PC-9 (cell line): ENCODE measurements at regions of chr1 and their contacts with region 1.

Region 1: DNA sequence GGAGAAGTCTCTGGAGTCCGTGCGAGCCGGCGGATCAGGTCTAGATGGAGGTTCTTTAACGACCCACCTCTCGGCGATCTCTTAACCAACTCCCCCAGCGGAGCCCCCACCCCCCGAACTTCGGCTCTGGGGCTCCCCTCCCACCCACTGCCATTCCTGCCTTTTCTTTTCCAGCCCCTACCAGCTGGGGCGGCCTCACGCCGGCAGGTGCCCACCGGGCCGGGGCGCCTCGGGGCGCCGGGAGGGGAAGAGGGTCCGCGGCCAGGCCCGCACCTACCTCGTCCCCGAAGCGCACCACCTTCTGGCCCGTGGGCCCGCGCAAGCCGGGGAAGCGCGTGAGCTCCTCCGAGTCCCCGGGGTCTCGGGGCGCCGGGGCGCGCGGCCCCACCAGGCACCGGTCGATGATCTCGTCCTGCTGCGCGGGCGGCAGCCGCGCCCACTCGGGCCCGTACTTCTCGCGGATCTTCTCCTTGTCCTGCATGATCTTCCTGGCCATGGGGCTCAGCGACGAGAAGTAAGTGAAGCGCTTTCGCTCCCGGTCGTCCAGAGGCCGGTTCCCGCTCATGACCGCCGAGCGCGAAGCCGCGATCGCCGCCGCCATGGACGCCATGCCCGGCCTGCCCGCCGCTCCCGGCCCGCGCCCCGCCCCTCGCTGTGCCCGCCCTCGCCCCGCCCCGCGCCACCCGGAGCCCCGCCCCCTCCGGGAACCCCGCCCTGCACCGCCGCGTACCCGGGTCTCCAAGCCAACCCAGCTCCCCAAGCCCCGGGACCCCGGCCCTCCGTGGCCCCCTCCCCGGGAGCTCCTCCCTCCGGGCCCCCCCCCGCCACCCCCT is at the start of gene C1orf198:
- DNase-seq: peak in 1 of 2 experiments; percentile 75
- H3K4me3 ChIP-seq: peak within 1 kb of the TSS; percentile 78
- H3K27ac ChIP-seq: peak within 1 kb of the TSS; percentile 61
- H3K4me1 ChIP-seq: peaks cover 37% of the 10 kb centered on the region
- H3K27me3 ChIP-seq: no peaks in the 10 kb centered on the region
- CTCF ChIP-seq: no peak; the same call in 1 of the 2 replicates
- total RNA-seq, gene C1orf198: 20.5 and 24.5 TPM in 2 replicates

Region 2: DNA sequence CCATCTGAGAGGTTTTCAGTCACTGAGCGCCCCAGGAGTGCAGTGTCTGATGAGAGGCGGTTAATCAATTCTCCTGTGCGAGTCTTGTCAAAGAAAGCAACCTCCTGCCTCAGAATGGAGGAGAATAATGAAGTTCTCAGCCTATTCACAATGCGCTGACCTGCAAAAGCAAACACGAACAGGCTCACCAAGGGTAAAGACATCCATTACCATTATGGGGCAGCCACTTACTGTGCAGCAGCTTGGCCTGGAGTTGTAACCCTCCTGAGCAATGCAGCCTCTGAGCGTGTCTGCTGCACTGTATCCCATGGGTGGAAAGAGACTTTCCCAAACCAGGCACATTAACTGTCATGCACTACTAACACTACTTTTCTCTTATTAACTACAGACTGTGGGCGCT is 1320.6 kb before region 1 on chr1:
- CTCF ChIA-PET with region 1: no interaction called
- POLR2A ChIA-PET with region 1: interaction called, 30 read pairs
- intact Hi-C with region 1: no loop called
- DNase-seq: no peak
- H3K4me3 ChIP-seq: no peak overlapping the region
- H3K27ac ChIP-seq: no peak overlapping the region
- H3K4me1 ChIP-seq: no peaks in the 10 kb centered on the region
- H3K27me3 ChIP-seq: no peaks in the 10 kb centered on the region
- CTCF ChIP-seq: no peak

Region 3: GRCh38 chr1:230681599-230681998 is 186.5 kb before region 1 on chr1:
- CTCF ChIA-PET with region 1: no interaction called
- POLR2A ChIA-PET with region 1: interaction called, 3 read pairs
- intact Hi-C with region 1: loop called (anchors 5 kb)
- DNase-seq: peak; percentile 69 to 84
- H3K4me3 ChIP-seq: no peak overlapping the region
- H3K27ac ChIP-seq: no peak overlapping the region
- H3K4me1 ChIP-seq: peaks cover 42% of the 10 kb centered on the region
- H3K27me3 ChIP-seq: no peaks in the 10 kb centered on the region
- CTCF ChIP-seq: no peak

Region 4: DNA sequence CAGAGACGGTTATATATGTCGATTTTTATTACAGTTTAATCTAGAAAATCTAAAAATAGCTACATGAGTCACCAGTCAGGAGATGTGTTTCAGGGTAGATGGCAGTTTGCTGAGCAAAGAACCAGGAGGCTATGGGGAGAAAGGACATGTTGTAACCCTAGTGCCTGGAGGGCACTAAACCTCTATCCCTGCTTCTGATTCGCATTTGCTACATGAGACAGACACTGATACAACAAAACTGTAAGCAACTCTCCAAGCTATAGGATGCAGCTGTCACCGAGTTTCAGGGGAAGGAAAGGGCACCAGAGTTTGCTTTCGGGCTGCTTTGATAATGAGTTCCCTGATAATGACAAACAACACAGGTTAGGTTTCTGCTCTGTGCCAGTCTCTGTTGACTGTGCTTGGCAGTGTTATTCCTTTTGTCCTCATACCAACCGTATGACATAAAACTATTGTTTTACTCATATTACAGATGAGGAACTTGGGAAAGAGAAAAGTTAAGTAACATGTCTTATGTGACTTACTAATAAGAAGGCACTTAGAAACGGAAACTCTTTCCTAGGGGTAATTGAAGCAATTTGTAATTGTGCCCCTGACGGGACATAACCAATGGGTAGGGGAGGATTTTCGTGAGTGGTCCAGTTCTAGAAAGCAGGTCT is 42.9 kb before region 1 on chr1:
- CTCF ChIA-PET with region 1: no interaction called
- POLR2A ChIA-PET with region 1: no interaction called
- intact Hi-C with region 1: loop called (anchors 2 kb)
- DNase-seq: peak; percentile 46 to 95
- H3K4me3 ChIP-seq: peak overlapping the region; percentile 23; the same call in 1 of the 2 replicates
- H3K27ac ChIP-seq: peak overlapping the region; percentile 93
- H3K4me1 ChIP-seq: peaks cover 42% of the 10 kb centered on the region
- H3K27me3 ChIP-seq: no peaks in the 10 kb centered on the region
- CTCF ChIP-seq: no peak

Region 5: GRCh38 chr1:230940848-230941247 is 72.7 kb after region 1 on chr1:
- CTCF ChIA-PET with region 1: no interaction called
- POLR2A ChIA-PET with region 1: no interaction called
- intact Hi-C with region 1: no loop called
- DNase-seq: no peak
- H3K4me3 ChIP-seq: no peak overlapping the region
- H3K27ac ChIP-seq: no peak overlapping the region
- H3K4me1 ChIP-seq: no peaks in the 10 kb centered on the region
- H3K27me3 ChIP-seq: no peaks in the 10 kb centered on the region
- CTCF ChIP-seq: no peak

Region 6: DNA sequence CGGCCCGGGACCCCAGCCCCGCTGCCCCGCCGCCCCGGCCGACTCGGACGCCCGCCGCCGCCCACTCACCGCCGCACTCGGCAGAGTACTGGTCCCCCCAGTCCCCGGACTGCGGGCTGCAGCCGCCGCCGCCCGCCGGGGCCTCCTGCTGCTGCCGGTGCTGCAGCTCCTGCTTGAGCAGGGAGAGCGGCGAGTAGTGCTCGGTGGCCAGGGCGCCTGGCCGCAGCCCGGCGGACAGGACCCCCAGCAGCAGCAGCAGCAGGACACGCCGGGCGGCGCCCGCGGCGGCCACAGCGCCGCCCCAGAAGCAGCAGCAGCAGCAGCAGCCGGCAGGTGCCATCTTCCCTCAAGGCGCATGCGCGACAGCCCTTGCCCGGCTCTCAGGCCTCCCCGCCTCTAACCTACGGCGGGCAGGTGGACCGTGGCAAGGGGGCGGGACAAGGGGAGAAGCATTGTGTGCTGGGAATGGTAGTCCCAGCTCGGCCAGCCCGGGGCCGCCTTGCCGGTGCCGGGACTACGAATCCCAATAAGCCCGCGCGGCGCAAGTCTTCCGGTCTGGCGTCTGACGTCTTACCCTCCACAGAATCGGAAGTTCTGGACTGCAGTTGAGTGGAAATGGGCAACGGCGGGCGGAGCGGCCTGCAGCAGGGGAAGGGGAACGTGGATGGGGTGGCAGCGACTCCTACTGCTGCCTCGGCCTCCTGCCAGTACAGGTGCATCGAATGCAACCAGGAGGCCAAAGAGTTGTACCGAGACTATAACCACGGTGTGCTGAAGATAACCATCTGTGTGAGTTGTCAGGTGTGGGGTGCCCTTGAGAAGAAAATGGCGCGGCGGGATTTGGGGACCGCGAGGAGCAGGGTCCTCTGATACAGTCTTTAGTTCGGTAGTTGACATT is 110.6 kb after region 1 on chr1 and contains the starts of genes ARV1 and TTC13:
- CTCF ChIA-PET with region 1: interaction called, 3 read pairs
- POLR2A ChIA-PET with region 1: interaction called, 4 read pairs
- intact Hi-C with region 1: loop called (anchors 2 kb)
- DNase-seq: peak; percentile 97 to 98
- H3K4me3 ChIP-seq: peak within 1 kb of the TSS; percentile 86
- H3K27ac ChIP-seq: no peak within 1 kb of the TSS
- H3K4me1 ChIP-seq: peaks cover 19% of the 10 kb centered on the region
- H3K27me3 ChIP-seq: no peaks in the 10 kb centered on the region
- CTCF ChIP-seq: peak; percentile 50; the same call in 1 of the 2 replicates
- total RNA-seq, gene ARV1: 8.0 and 12.0 TPM in 2 replicates
- total RNA-seq, gene TTC13: 7.5 and 10.7 TPM in 2 replicates